A673 (cell line): ENCODE measurements at regions of chr7 and their contacts with region 1.

Region 1: DNA sequence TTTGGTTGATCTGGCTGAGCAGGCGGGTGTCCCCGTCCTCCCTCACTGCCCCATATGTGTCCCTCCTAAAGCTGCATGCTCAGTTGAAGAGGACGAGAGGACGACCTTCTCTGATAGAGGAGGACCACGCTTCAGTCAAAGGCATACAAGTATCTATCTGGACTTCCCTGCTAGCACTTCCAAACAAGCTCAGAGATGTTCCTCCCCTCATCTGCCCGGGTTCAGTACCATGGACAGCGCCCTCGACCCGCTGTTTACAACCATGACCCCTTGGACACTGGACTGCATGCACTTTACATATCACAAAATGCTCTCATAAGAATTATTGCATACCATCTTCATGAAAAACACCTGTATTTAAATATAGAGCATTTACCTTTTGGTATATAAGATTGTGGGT is 26.9 kb upstream of the TRIM56 start:
- DNase-seq: peak; percentile 15
- H3K4me3 ChIP-seq: no peak overlapping the region
- H3K27ac ChIP-seq: no peak overlapping the region
- H3K4me1 ChIP-seq: no peaks in the 10 kb centered on the region
- H3K27me3 ChIP-seq: peaks cover 48% of the 10 kb centered on the region
- CTCF ChIP-seq: no peak

Region 2: GRCh38 chr7:100840470-100841100 is 217.8 kb before region 1 on chr7:
- CTCF ChIA-PET with region 1: no interaction called
- POLR2A ChIA-PET with region 1: no interaction called
- intact Hi-C with region 1: no loop called
- DNase-seq: no peak
- H3K4me3 ChIP-seq: no peak overlapping the region
- H3K27ac ChIP-seq: no peak overlapping the region
- H3K4me1 ChIP-seq: peaks cover 14% of the 10 kb centered on the region
- H3K27me3 ChIP-seq: no peaks in the 10 kb centered on the region
- CTCF ChIP-seq: no peak

Region 3: DNA sequence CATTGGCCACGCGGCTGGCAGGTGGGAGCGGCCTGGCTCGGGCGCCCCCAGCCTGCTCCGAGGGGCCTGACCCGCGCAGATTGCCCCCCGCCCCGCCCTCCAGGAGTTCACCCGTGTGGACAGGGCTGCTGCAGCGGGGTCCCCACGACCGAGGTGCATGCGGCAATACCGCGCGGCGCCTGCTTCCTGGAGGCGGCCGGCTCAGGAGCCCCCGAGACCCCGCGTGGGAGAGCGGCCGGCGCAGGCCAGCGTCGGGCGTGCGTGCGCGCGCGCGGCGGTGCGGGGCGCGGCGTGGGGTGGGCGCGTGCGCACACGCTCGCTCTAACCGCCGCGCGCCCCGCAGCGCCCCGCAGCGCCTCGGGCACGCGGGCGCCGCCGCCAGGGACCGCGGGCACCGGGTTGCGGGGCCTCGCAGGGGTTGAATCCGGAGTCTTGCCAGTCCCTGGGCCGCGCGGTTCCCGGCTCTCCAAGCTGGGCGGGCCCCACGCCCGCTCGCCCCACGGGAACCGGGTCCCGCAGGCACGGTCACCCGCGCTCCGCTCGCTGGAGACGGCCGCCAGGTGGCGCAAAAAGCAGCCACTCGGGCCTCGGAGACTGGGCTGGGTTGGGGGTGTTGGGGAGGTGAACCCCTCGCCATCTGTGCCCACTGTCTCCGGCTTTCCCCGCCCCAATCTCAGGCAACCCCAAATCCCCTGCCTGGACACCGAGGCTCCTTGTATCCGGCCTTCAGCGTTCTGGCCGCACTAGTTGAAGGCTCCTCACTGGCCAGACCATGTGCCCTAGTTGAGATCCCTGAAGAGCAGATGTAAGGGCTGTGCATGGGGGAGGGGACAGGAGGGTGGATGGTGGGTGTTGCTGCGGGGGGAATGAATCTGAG is 161.4 kb before region 1 on chr7:
- CTCF ChIA-PET with region 1: interaction called, 3 read pairs
- POLR2A ChIA-PET with region 1: no interaction called
- intact Hi-C with region 1: loop called (anchors 1 kb)
- DNase-seq: peak; percentile 56
- H3K4me3 ChIP-seq: peak overlapping the region; percentile 50
- H3K27ac ChIP-seq: no peak overlapping the region
- H3K4me1 ChIP-seq: peaks cover 9% of the 10 kb centered on the region
- H3K27me3 ChIP-seq: peaks cover 7% of the 10 kb centered on the region
- CTCF ChIP-seq: peak; percentile 87

Region 4: DNA sequence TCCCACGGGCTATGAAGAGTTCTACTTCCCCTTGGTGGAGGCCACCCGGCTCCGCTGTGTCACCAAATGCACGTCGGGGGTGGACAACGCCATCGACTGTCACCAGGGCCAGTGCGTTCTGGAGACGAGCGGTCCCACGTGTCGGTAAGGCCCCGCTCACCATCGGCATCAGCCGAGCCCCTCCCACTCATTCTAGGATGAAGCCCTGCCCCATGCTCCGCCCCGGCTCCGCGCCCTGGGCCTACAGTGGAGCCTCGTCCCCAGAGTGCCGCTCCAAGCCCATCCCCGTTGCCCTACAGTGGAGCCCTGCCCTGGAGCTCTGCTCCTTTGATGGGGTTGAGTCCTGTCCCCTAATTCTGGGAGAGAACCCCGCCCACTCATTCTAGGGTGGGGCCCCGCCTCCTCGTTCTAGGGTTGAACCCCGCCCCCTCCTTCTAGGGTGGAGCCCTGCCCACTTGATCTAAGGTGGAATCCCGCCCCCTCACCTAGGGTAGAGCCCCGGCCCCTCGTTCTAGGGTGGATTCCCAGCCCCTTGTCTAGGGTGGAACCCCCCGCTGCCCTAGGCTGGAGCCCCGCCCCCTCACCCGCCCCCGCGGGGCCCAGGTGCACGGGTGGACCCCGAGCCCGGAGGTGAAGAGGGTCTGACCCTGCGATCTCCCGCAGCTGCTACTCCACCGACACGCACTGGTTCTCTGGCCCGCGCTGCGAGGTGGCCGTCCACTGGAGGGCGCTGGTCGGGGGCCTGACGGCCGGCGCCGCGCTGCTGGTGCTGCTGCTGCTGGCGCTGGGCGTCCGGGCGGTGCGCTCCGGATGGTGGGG is 92.4 kb before region 1 on chr7:
- CTCF ChIA-PET with region 1: no interaction called
- POLR2A ChIA-PET with region 1: no interaction called
- intact Hi-C with region 1: loop called (anchors 1 kb)
- DNase-seq: peak; percentile 87
- H3K4me3 ChIP-seq: peak overlapping the region; percentile 41
- H3K27ac ChIP-seq: no peak overlapping the region
- H3K4me1 ChIP-seq: peaks cover 11% of the 10 kb centered on the region
- H3K27me3 ChIP-seq: peaks cover 67% of the 10 kb centered on the region
- CTCF ChIP-seq: peak; percentile 97

Region 5: DNA sequence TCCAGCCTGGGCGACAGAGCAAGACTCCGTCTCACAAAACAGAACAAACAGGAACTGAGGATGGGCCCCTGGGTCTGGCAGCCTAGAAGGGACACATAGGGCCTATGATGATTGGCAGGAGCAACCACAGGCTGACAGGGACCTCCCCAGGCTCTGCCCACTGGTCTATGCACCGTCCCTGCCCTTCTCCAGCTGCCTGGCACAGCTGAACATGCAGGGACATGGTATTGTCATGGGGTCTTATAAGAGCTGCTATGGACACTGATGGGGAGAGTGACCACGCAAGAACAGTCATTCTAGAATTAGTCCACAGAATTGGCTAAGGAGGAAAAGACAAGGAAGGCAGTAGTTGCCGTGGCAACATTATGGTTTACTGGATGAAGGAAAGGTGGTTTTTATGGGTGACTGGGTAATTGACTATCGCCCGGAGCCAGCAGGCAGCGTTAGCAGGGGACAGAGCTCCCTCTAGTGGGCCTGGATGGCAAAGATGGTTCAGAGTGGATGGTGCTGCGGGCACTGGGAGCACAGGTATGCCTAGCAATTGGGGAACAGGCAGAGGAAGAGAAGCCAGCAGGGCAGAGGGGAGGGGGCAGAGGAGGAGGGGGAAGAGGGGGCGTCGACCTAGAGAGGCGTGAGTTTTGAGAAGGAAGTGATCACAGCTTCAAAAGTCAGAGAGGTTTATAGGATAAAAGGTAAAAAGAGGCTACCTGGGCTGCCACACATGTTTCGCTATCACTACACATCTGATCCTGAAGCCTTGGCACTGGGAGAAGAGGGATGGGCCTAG is 19.1 kb after region 1 on chr7:
- CTCF ChIA-PET with region 1: interaction called, 13 read pairs
- POLR2A ChIA-PET with region 1: no interaction called
- intact Hi-C with region 1: no loop called
- DNase-seq: peak; percentile 80
- H3K4me3 ChIP-seq: no peak overlapping the region
- H3K27ac ChIP-seq: no peak overlapping the region
- H3K4me1 ChIP-seq: no peaks in the 10 kb centered on the region
- H3K27me3 ChIP-seq: no peaks in the 10 kb centered on the region
- CTCF ChIP-seq: peak; percentile 96

Region 6: DNA sequence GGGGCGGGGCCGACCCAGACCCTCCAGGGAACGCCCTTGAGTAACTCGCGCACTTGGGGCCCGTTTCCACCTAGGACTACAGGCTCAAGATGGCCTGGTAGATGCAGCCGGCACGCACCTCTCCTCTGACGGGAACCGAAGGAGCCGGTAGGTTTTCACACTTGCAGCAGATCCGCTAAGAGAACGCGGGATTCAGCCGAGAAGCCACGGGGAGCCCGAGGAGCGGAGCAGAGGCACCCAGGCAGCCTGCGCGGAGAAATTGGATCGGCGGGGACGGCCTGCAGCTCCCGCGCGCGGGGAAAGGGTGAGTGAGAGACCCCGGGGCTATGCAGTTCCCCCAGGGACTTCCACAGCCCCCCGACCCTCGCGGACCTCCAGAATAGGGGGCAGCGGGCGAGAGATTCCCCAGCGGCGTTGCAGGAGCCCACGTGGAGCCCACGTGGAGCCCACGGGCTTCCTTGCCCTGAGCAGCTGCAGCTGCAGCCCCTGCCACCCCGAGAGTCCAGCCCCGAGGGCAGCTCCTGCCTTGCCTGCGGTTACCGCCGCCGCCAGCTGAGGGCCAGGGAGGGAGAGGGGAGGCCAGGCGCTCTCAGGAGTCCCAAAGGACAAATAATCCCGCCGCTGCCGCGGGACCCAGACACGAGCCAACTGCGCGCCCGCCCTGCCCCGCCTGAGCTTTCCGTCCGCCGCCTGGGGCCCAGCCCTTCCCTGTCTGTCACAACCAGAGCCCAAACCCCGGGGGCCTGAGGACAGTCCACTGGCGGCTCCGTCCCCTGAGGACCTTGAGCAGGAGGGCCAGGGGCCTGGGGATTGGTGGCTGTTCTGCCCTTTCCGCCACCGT is 250.1 kb after region 1 on chr7:
- CTCF ChIA-PET with region 1: no interaction called
- POLR2A ChIA-PET with region 1: no interaction called
- intact Hi-C with region 1: no loop called
- DNase-seq: peak; percentile 84
- H3K4me3 ChIP-seq: peak overlapping the region; percentile 53
- H3K27ac ChIP-seq: peak overlapping the region; percentile 19
- H3K4me1 ChIP-seq: no peaks in the 10 kb centered on the region
- H3K27me3 ChIP-seq: peaks cover 6% of the 10 kb centered on the region
- CTCF ChIP-seq: no peak